ENCODE measurements at regions of chr19 and their contacts with region 1.

Region 1: DNA sequence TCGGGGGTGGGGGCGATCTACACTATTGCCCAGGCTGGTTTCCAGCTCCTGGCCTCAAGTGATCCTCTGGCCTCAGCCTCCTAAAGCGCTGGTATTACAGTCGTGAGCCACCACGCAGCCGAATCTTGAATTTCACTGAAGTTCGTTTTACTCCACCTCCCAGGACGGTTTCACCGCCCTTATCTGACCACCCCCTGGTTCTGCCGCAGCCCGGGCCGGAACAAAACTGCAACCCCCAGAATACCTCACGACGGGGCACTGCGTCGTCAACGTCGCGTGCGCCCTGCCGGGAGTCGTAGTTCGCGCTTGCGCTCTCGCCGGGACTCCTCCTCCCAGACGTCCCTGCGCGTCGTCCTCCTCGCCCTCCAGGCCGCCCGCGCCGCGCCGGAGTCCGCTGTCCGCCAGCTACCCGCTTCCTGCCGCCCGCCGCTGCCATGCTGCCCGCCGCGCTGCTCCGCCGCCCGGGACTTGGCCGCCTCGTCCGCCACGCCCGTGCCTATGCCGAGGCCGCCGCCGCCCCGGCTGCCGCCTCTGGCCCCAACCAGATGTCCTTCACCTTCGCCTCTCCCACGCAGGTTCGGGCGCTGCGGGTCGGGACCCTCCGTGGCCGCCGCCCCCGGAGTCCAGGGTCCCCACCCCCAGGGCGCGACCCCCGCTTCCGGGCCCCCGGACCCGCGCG is at the start of gene ATP5F1D:
- H3K4me3 ChIP-seq: peak within 1 kb of the TSS; percentile 75
- H3K27ac ChIP-seq: peak within 1 kb of the TSS; percentile 63
- H3K4me1 ChIP-seq: peaks cover 8% of the 10 kb centered on the region
- CTCF ChIP-seq: 0 out of 2 replicates have a peak, but pooled peaks have one; percentile 16

Region 2: DNA sequence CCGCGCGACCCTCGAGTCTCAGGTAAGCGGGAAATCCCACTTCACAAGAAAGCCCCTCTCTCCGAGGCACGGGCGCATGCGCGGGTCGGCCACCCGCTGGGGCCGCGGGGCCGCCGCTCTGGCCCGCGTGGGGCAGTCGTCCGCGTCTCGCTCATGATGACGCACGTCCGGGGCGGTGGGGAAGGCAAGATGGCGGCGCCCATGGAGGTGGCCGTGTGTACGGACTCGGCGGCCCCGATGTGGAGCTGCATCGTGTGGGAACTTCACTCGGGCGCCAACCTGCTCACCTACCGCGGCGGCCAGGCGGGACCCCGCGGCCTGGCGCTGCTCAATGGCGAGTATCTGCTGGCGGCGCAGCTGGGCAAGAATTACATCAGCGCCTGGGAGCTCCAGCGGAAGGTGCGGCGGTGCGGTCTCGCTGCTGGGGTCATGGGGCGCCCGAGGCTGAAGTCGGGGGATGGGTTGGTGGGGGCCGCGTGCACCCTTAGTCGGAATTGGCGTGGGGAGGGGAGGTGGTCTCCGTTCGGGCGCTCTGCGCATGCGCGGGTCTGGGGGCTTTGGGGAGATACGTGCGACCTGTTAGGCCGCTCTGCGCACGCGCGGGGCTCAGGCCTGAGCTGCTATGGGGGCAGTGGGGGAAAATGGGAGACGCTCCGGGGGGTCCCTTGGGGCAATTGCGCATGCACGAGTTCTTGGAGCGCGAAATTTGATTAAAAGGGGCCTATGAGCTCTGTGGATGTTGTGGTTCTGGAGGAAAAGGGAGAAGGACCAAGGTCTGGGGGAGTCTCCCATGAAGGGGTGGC is 257.2 kb before region 1 on chr19 and contains the start of gene WDR18:
- CTCF ChIA-PET with region 1: interaction called, 11 read pairs
- POLR2A ChIA-PET with region 1: no interaction called
- H3K4me3 ChIP-seq: peak within 1 kb of the TSS; percentile 99
- H3K27ac ChIP-seq: peak within 1 kb of the TSS; percentile 90
- H3K4me1 ChIP-seq: peaks cover 2% of the 10 kb centered on the region; the same call in 1 of the 2 replicates
- CTCF ChIP-seq: peak; percentile 90

Region 3: GRCh38 chr19:1213391-1214286 is 27.9 kb before region 1 on chr19:
- CTCF ChIA-PET with region 1: interaction called, 10 read pairs
- POLR2A ChIA-PET with region 1: interaction called, 3 read pairs
- H3K4me3 ChIP-seq: no peak overlapping the region
- H3K27ac ChIP-seq: peak overlapping the region; percentile 51
- H3K4me1 ChIP-seq: peaks cover 12% of the 10 kb centered on the region; the same call in 1 of the 2 replicates
- CTCF ChIP-seq: no peak

Region 4: DNA sequence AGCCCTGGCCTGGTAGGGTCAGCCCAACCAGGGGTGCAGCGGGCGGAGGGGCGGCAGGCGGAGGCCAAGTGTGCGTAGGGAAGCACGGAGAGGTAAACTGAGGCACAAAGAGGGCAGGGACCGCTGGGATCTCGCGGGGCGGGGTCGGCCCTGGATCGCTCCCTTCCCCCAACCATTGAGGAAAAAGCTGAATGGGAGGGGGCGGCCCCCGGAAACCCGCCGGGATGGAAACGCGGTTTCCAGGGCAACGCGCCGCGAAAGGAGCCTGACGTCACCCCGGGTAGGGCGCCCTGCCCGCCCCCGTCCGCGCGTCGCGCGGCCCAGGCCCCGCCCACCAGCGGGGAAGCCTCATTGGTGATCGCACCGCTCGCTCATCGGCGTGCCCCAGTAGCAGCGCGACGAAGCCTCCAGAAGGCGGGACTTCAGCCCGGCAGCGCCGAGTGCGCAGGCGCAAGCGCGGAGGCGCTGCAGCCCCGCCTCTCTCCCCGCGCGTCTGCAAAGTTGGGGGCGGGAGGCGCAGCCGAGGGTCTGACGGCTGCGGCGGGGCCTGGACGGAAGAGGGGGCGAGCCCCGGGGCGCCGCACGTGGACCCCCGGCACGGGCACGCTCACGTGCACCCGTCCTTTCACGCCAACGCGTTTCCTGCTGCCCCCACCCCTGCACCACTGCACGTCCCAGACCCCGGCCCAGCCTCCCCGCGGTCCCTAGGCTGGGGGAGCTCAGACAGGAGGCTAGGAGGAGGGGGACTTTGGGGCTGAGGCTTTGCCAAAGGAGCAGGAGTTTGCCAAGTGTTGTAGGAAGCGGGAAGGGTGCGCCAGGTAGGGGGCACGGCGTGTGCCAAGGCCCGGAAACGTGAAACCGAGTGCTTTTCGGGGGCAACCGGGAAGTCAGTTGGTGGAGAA is 19.3 kb after region 1 on chr19:
- CTCF ChIA-PET with region 1: interaction called, 299 read pairs
- POLR2A ChIA-PET with region 1: interaction called, 128 read pairs
- H3K4me3 ChIP-seq: peak overlapping the region; percentile 55
- H3K27ac ChIP-seq: peak overlapping the region; percentile 68; the same call in 1 of the 2 replicates
- H3K4me1 ChIP-seq: peaks cover 25% of the 10 kb centered on the region
- CTCF ChIP-seq: no peak

Region 5: DNA sequence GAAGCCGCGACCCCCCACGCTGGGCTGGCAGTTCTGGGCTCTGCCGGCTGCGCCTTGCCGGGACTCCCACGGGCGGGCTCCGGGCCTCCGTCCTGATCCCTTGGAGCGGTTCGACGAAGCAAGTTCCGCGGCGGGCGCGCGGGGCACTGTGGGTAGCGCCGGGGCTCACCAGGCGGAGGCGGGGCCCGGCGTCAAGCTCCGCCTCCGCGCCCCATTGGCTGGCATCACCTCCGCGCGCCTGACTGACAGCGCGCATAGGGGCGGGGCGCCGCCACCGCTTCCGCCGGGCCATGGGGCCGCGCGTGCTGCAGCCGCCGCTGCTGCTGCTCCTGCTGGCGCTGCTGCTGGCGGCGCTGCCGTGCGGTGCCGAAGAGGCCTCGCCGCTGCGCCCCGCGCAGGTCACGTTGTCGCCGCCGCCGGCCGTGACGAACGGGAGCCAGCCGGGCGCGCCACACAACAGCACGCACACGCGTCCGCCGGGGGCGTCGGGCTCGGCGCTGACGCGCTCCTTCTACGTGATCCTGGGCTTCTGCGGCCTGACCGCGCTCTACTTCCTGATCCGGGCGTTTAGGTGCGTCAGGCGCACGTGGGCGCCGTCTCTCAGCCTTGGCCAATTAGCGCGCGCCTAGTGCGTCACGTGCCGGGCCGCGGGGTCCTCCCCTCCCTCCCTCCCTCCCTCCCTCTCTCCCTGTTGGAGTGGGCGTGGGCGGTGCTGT is 33.9 kb after region 1 on chr19 and contains the start of gene FAM174C:
- CTCF ChIA-PET with region 1: interaction called, 23 read pairs
- POLR2A ChIA-PET with region 1: interaction called, 22 read pairs
- H3K4me3 ChIP-seq: peak within 1 kb of the TSS; percentile 58
- H3K27ac ChIP-seq: peak within 1 kb of the TSS; percentile 98
- H3K4me1 ChIP-seq: peaks cover 14% of the 10 kb centered on the region
- CTCF ChIP-seq: no peak

Region 6: DNA sequence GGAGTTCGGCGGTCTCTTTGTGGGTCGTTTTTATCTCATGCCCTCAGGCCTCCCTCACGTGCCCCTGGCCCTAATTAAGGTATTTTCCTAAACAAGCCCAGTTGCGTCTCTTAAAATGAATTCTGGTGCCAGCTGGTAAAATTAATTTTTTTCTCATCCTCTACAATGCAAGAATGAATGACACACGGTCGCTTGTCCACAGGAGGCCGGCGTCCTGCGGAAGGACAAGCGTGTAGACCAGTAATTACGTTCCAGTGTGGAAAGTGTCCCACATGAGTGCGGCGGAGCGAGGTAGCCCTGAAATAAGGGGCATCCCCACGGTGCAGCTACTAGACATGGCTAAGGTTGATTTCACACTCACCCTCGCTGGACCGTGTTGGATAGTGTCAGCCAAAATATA is 107.7 kb after region 1 on chr19:
- CTCF ChIA-PET with region 1: no interaction called
- POLR2A ChIA-PET with region 1: no interaction called
- H3K4me3 ChIP-seq: no peak overlapping the region
- H3K27ac ChIP-seq: no peak overlapping the region
- H3K4me1 ChIP-seq: no peaks in the 10 kb centered on the region
- CTCF ChIP-seq: no peak